ENCODE measurements at regions of chr18 and their contacts with region 1.

Region 1: GRCh38 chr18:63016270-63016669 is 300.9 kb downstream of the PHLPP1 start:
- DNase-seq: peak; percentile 51 to 62 (median 56)
- H3K4me3 ChIP-seq: no peak overlapping the region
- H3K4me3 Mint-ChIP-seq: no peak overlapping the region
- H3K27ac ChIP-seq: no peak overlapping the region
- H3K27ac Mint-ChIP-seq: no peak overlapping the region
- H3K4me1 ChIP-seq: no peaks in the 10 kb centered on the region
- H3K4me1 Mint-ChIP-seq: peaks cover 0 to 2% (median 0%) of the 10 kb centered on the region in 4 donors
- H3K27me3 ChIP-seq: peaks cover 5% of the 10 kb centered on the region
- H3K27me3 Mint-ChIP-seq: peaks cover 5 to 6% of the 10 kb centered on the region in 2 donors

Region 2: DNA sequence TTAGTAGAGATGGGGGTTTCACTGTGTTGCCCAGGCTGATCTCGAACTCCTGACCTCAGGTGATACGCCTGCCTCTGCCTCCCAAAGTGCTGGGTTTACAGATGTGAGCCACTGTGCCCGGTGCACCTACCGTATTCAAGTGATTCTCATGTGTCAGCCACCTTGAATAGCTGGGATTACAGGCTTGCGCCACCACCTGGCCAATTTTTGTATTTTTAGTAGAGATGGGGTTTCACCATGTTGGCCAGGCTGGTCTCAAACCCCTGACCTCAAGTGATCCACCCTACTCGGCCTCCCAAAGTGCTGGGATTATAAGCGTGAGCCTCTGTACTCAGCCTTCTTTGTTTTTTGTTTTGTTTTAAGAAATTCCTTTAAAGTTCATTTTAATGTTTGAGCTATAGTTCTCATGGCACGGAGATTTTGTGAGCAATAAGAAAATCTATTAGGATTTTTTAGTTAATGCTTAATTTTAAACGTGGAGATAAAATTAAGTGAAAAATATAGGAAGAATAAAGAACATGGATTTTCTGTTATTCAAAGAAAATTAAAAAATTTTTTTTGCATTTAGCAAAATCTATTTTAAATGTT is 58.3 kb before region 1 on chr18:
- CTCF ChIA-PET with region 1: no interaction called
- POLR2A ChIA-PET with region 1: no interaction called
- intact Hi-C with region 1: no loop called
- DNase-seq: peak; percentile 18 to 35 (median 33)
- H3K4me3 ChIP-seq: no peak overlapping the region
- H3K4me3 Mint-ChIP-seq: no peak overlapping the region
- H3K27ac ChIP-seq: no peak overlapping the region
- H3K27ac Mint-ChIP-seq: no peak overlapping the region
- H3K4me1 ChIP-seq: no peaks in the 10 kb centered on the region
- H3K4me1 Mint-ChIP-seq: peaks cover 0 to 9% (median 1%) of the 10 kb centered on the region in 4 donors
- H3K27me3 ChIP-seq: no peaks in the 10 kb centered on the region
- H3K27me3 Mint-ChIP-seq: no peaks in the 10 kb centered on the region

Region 3: GRCh38 chr18:63331105-63331504 is 314.8 kb after region 1 on chr18:
- CTCF ChIA-PET with region 1: interaction called, 113 read pairs
- POLR2A ChIA-PET with region 1: no interaction called
- intact Hi-C with region 1: no loop called
- DNase-seq: no peak
- H3K4me3 ChIP-seq: no peak overlapping the region
- H3K4me3 Mint-ChIP-seq: no peak overlapping the region
- H3K27ac ChIP-seq: no peak overlapping the region
- H3K27ac Mint-ChIP-seq: no peak overlapping the region
- H3K4me1 ChIP-seq: no peaks in the 10 kb centered on the region
- H3K4me1 Mint-ChIP-seq: no peaks in the 10 kb centered on the region
- H3K27me3 ChIP-seq: no peaks in the 10 kb centered on the region
- H3K27me3 Mint-ChIP-seq: no peaks in the 10 kb centered on the region

Region 4: DNA sequence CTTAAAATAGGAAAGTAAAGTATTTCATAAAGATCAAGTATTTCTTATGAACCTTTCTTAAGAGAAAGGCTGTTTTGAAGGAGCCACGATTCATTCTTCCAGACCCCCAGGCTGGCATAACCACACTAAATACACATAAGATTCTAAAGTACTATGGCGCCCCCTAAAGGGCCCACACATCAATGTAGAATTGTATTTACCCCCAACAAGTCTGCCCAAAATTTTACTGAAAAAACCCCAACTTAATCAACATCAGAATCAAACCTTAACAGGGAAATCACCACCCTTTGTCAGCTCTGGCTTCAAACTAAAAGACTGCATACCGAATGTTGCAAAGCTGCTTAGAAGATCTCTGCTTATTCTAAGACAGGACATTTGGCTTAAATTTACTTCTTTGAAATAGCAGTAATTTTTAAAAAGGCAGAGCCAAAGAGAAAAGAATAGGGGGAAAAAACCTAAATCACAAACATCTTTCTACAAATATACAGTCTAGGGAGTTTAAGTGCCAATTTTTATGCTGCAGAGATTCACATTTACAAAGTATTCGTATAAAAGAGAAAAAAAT is 323.7 kb after region 1 on chr18:
- CTCF ChIA-PET with region 1: interaction called, 62 read pairs
- POLR2A ChIA-PET with region 1: no interaction called
- intact Hi-C with region 1: loop called (anchors 1 kb)
- DNase-seq: peak in 4 of 5 donors; percentile 43 to 51 (median 49)
- H3K4me3 ChIP-seq: no peak overlapping the region
- H3K4me3 Mint-ChIP-seq: no peak overlapping the region
- H3K27ac ChIP-seq: no peak overlapping the region
- H3K27ac Mint-ChIP-seq: peak overlapping the region in 3 of 7 donors; percentile 43 to 69 (median 69)
- H3K4me1 ChIP-seq: no peaks in the 10 kb centered on the region
- H3K4me1 Mint-ChIP-seq: peaks cover 0 to 7% (median 1%) of the 10 kb centered on the region in 4 donors
- H3K27me3 ChIP-seq: no peaks in the 10 kb centered on the region
- H3K27me3 Mint-ChIP-seq: no peaks in the 10 kb centered on the region

Region 5: DNA sequence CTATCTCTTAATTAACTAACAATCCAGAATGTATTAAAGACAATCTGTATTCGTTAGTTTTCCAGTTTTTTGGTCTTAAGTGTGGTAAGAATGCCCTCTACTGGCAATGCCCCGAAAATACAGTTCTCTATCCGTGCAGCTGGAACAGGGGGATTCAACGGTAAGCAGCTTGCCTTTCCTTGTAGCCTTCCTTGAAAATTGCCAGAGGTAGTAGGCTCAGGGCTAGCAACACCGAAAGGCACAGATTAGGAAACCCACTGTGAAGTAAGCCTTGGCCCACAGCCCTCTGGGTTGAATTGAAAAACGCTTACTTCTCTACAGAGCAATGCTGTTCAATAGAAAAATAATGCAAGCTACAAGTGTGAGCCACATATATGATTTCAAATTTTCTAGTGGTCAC is 423.1 kb after region 1 on chr18:
- CTCF ChIA-PET with region 1: interaction called, 182 read pairs
- POLR2A ChIA-PET with region 1: interaction called, 3 read pairs
- intact Hi-C with region 1: loop called (anchors 1 kb)
- DNase-seq: peak in 4 of 5 donors; percentile 54 to 58 (median 56)
- H3K4me3 ChIP-seq: no peak overlapping the region
- H3K4me3 Mint-ChIP-seq: peak overlapping the region in 1 of 8 donors; percentile 32
- H3K27ac ChIP-seq: no peak overlapping the region
- H3K27ac Mint-ChIP-seq: no peak overlapping the region
- H3K4me1 ChIP-seq: no peaks in the 10 kb centered on the region
- H3K4me1 Mint-ChIP-seq: peaks cover 0 to 3% (median 2%) of the 10 kb centered on the region in 4 donors
- H3K27me3 ChIP-seq: peaks cover 3% of the 10 kb centered on the region
- H3K27me3 Mint-ChIP-seq: peaks cover 0 to 9% of the 10 kb centered on the region in 2 donors

Region 6: GRCh38 chr18:63907664-63908063 is 891.4 kb after region 1 on chr18 and contains the start of gene SERPINB10:
- CTCF ChIA-PET with region 1: no interaction called
- POLR2A ChIA-PET with region 1: no interaction called
- intact Hi-C with region 1: no loop called
- DNase-seq: no peak
- H3K4me3 ChIP-seq: no peak within 1 kb of the TSS
- H3K4me3 Mint-ChIP-seq: peak within 1 kb of the TSS in 1 of 8 donors; percentile 7
- H3K27ac ChIP-seq: no peak within 1 kb of the TSS
- H3K27ac Mint-ChIP-seq: no peak within 1 kb of the TSS
- H3K4me1 ChIP-seq: no peaks in the 10 kb centered on the region
- H3K4me1 Mint-ChIP-seq: no peaks in the 10 kb centered on the region
- H3K27me3 ChIP-seq: no peaks in the 10 kb centered on the region
- H3K27me3 Mint-ChIP-seq: peaks cover 5 to 9% of the 10 kb centered on the region in 2 donors
- total RNA-seq, gene SERPINB10: not detected

Region 7: DNA sequence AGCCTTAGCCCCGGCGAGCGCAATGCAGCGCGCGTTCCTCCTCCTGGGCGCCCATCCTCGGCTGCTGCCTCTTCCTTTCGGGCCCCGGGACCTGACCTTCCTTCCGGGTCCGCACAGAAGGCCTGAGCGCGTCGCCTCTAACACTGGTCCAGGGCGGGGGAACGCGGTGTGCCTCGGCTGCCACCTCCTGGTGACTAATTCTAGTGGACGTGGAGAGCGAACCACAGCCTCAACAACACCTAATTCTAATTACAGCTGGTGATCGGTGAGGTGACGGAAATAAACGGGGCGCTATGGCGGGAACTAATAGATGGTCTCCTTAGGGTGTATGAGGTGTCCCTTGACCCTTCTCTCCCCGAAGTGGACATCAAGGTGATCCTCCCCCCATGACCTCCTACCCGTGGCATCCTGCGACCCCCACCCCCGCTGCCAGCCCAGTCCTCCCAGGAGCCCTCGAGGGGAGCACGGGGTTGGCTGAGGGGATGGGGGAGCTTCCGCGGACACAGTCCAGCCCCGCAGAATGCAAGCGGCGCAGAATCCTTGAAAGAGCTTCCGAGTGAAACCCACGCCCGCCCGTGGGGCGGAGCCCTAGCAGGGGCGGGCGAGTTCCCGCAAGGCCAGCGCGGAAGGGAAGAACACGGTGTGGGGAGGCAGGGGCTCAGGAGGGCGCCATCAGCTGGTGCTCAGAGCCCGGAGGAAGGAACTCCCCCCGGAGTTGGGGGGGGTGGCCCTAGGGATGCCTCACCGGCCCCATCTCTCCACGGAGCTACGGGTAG is 920.1 kb after region 1 on chr18:
- CTCF ChIA-PET with region 1: no interaction called
- POLR2A ChIA-PET with region 1: no interaction called
- intact Hi-C with region 1: loop called (anchors 5 kb)
- DNase-seq: peak; percentile 34 to 61 (median 44)
- H3K4me3 ChIP-seq: peak overlapping the region; percentile 27 to 55
- H3K4me3 Mint-ChIP-seq: peak overlapping the region in 6 of 8 donors; percentile 69 to 83 (median 77)
- H3K27ac ChIP-seq: no peak overlapping the region
- H3K27ac Mint-ChIP-seq: no peak overlapping the region
- H3K4me1 ChIP-seq: peaks cover 14% of the 10 kb centered on the region
- H3K4me1 Mint-ChIP-seq: peaks cover 0 to 5% (median 2%) of the 10 kb centered on the region in 4 donors
- H3K27me3 ChIP-seq: peaks cover 5% of the 10 kb centered on the region
- H3K27me3 Mint-ChIP-seq: peaks cover 3 to 9% of the 10 kb centered on the region in 2 donors

Measured in CD4-positive, alpha-beta memory T cell (primary cell).